Gastrocnemius medialis (tissue), 4 donors: ENCODE measurements at regions of chr9 and their contacts with region 1.

Region 1: GRCh38 chr9:93566408-93567270 is 9.7 kb upstream of the PHF2 start:
- DNase-seq: peak; percentile 95 to 97
- ATAC-seq: peak; percentile 93 to 94
- H3K4me3 ChIP-seq: peak overlapping the region; percentile 64 to 88 (median 72)
- H3K27ac ChIP-seq: peak overlapping the region; percentile 89 to 99 (median 94)
- H3K4me1 ChIP-seq: peaks cover 10 to 13% of the 10 kb centered on the region in 2 donors
- H3K27me3 ChIP-seq: no peaks in the 10 kb centered on the region
- CTCF ChIP-seq: peak; percentile 92 to 98 (median 95)
- POLR2A ChIP-seq: peak; percentile 83 to 89

Region 2: GRCh38 chr9:93207326-93207814 is 359.3 kb before region 1 on chr9:
- in situ Hi-C with region 1: no loop called
- intact Hi-C with region 1: loop called (anchors 5 kb)
- DNase-seq: peak; percentile 61 to 78
- ATAC-seq: peak; percentile 92 to 94
- H3K4me3 ChIP-seq: peak overlapping the region in 3 of 4 donors; percentile 15 to 41 (median 20)
- H3K27ac ChIP-seq: peak overlapping the region; percentile 82 to 90 (median 86)
- H3K4me1 ChIP-seq: peaks cover 52 to 56% of the 10 kb centered on the region in 2 donors
- H3K27me3 ChIP-seq: no peaks in the 10 kb centered on the region
- CTCF ChIP-seq: peak in 2 of 5 experiments; percentile 28 to 30
- POLR2A ChIP-seq: no peak

Region 3: DNA sequence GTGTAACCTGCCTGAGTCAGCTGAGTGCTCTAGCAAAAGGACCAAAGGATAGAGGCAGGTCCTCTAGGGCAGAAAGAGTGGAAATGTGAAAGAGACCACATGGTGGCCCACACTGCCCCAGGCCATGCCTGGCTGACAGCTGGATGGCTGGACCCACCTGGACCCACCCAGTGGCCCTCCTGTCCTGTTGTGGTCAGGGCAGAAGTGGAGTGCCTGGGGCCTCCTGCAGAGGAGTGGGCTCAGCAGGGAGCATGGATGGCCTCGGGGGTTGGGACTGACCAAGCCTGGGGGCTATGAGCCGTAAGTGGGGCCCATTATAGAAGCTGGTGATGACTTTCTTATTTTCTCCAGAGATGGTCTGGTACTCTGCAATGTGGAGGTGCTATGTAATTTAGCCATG is 57.6 kb before region 1 on chr9:
- in situ Hi-C with region 1: no loop called
- intact Hi-C with region 1: loop called (anchors 2 kb)
- DNase-seq: no peak
- ATAC-seq: no peak
- H3K4me3 ChIP-seq: no peak overlapping the region
- H3K27ac ChIP-seq: peak overlapping the region in 2 of 4 donors; percentile 69 to 80
- H3K4me1 ChIP-seq: peaks cover 47 to 73% of the 10 kb centered on the region in 2 donors
- H3K27me3 ChIP-seq: no peaks in the 10 kb centered on the region
- CTCF ChIP-seq: no peak
- POLR2A ChIP-seq: no peak